Activated T-helper 1 cell treated with anti-CD3 and anti-CD28 coated beads, Interleukin-12 subunit alpha, Interleukin-12 subunit beta, Interleukin-2, Interleukin-4 antibody, amounts not matched to agents 30 ng/mL and 10 ng/mL and 1 ng/mL, durations not matched to agents 14 hours and 24 hours and 36 hours (primary cell): ENCODE measurements at regions of chr5 and their contacts with region 1.

Region 1: DNA sequence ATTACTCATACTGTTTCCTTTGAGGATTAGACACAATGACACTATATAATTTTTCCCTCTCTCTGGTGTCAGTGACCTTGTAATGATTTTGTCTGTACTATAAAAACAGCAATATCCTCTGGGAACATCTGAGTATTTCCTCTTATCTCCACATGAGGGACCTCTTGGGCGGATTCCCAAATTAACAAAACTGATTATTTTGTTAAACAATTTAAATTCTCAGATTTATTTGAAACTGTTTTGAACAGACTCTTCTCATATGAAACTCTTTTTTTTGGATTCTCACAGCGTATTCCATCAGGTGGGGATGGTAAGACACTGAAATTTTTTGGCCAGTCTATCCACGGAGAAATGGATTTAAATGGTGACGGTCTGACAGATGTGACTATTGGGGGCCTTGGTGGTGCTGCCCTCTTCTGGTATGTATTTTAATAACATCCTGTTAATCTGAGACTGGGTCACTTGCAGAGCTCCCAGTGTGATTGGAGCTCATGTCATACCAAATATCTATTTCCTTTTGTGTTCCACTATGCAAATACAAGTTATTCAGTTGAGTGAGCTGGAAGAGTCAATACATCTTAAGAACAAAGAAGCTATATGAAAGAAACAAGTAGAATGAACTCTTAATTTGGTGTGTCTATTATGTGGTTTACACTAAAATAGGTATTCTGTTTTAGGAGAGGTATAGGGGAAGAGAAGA is 73.8 kb upstream of the ITGA2 start:
- DNase-seq: peak; percentile 34
- H3K4me3 Mint-ChIP-seq: peak overlapping the region; percentile 34
- H3K27ac Mint-ChIP-seq: no peak overlapping the region
- H3K4me1 Mint-ChIP-seq: peaks cover 10% of the 10 kb centered on the region
- H3K27me3 Mint-ChIP-seq: peaks cover 4% of the 10 kb centered on the region

Region 2: GRCh38 chr5:52560366-52560765 is 355.0 kb before region 1 on chr5:
- intact Hi-C with region 1: loop called (anchors 5 kb)
- DNase-seq: no peak
- H3K4me3 Mint-ChIP-seq: no peak overlapping the region
- H3K27ac Mint-ChIP-seq: no peak overlapping the region
- H3K4me1 Mint-ChIP-seq: no peaks in the 10 kb centered on the region
- H3K27me3 Mint-ChIP-seq: peaks cover 8% of the 10 kb centered on the region

Region 3: DNA sequence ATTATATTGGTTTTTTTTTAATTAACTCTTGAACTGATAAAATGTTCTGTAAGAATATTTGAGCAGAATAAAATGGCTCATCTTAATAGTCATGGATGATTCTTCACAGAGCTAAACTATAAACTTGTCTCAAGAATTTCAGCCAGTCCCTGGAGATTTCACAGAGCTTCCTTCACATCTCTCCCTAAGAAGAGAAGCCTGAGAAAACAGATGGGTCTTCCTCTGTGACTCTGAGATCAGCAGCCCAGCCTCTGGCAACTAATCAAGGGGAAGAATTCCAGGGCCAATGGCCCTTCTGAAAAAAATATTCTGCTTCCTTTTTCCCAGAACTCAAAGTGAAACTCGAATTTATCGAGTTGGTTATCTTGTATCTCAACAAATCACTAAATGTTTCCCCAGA is 249.8 kb before region 1 on chr5:
- intact Hi-C with region 1: loop called (anchors 2 kb)
- DNase-seq: no peak
- H3K4me3 Mint-ChIP-seq: no peak overlapping the region
- H3K27ac Mint-ChIP-seq: no peak overlapping the region
- H3K4me1 Mint-ChIP-seq: peaks cover 5% of the 10 kb centered on the region
- H3K27me3 Mint-ChIP-seq: peaks cover 30% of the 10 kb centered on the region

Region 4: GRCh38 chr5:52709171-52709925 is 206.0 kb before region 1 on chr5:
- intact Hi-C with region 1: loop called (anchors 5 kb)
- DNase-seq: peak; percentile 17
- H3K4me3 Mint-ChIP-seq: peak overlapping the region; percentile 28
- H3K27ac Mint-ChIP-seq: peak overlapping the region; percentile 59
- H3K4me1 Mint-ChIP-seq: peaks cover 74% of the 10 kb centered on the region
- H3K27me3 Mint-ChIP-seq: no peaks in the 10 kb centered on the region

Region 5: DNA sequence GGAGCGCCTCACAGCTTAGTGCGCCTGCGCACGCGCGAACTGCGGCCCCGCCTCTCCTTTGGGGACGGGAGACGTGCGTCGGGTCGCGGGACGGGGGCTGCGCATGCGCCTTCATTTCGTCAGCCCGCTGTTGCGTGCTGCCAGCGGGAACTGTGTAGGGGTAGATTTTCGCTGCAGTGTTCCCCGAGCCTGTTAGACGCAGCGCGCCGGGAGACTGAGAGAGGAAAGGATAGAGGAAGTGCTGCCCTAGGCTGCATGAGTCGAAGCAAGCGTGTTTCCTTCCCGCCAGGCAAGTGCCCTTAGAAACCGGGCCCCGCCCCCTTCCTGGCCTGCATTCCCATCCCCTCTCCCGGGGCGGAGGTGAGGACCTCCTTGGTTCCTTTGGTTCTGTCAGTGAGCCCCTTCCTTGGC is 115.3 kb before region 1 on chr5:
- intact Hi-C with region 1: loop called (anchors 5 kb)
- DNase-seq: peak; percentile 95
- H3K4me3 Mint-ChIP-seq: peak overlapping the region; percentile 90
- H3K27ac Mint-ChIP-seq: peak overlapping the region; percentile 88
- H3K4me1 Mint-ChIP-seq: peaks cover 58% of the 10 kb centered on the region
- H3K27me3 Mint-ChIP-seq: peaks cover 3% of the 10 kb centered on the region

Region 6: DNA sequence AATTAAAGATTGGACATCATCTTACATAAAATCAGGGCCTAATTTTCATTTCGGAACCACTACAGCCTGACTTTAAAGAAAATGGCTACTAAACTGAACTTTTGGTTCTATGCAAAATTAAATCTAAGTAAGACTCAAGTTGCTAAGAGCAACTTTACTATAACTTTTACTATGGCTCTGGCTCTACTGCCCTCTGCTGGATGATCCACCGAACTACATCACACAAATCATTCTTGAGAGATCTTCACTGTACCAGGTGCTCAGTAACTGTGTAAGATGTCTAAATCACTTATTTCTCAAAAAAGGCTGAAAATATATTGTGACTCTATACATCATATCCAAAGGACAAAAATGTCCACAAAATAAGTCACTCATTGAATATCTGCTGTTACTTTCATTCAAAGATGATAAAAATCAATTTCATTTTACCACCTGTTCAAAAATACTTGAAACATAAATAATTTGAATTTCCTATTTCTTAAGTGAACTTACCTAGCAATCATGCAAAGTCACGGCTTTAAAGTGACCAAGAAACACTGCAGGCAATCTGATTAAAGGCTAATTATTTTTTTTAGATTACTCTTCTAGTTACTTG is 180.7 kb after region 1 on chr5:
- intact Hi-C with region 1: loop called (anchors 1 kb)
- DNase-seq: peak; percentile 56
- H3K4me3 Mint-ChIP-seq: no peak overlapping the region
- H3K27ac Mint-ChIP-seq: no peak overlapping the region
- H3K4me1 Mint-ChIP-seq: peaks cover 17% of the 10 kb centered on the region
- H3K27me3 Mint-ChIP-seq: no peaks in the 10 kb centered on the region